B cell (primary cell): ENCODE measurements at regions of chr1 and their contacts with region 1.

Region 1: DNA sequence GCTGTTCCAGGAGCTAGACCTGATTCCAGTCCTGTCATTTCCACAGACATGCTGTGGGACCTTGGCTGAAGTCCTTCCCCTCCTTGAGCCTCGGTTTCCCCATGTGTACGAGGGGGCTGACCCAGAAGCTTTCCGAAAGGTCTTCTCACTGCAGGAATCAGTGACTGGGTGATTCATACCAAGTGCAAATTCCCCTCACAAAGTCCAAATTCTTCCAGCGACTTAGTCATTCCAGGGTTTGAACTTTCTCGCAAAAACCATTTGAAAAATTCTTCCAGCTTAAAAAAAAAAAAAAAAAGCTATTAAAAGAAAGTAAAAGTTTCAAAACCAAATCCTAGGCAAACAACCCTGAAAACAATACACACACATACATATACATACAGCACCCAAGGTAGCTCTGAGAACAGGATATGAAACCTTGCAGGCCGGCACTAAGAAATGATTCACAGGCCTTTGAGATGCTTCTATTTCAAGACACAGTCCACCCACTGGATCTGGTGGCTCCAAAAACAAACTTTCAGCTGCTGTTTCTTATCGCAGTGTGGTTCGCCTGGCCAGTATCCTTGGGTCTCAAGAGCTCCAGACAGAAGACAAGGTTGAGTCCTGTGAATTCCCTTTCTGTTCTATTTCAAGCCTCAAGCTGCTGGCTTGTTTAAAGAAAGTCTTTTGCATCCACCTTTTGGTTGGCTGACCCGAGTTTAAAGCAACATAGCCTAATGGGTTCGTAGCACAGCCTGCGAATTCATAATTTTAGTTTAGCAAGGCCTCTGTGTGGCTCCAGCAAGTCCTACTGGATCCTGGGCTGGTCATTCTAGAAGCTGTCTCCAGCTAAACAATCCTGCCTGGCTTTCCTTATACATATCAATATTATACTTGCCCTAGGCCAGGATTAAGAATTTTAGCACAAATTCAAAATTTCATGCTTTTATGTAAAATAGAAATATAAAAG is 18.0 kb upstream of the ID3 start:
- DNase-seq: peak; percentile 80
- ATAC-seq: peak; percentile 85
- H3K4me3 ChIP-seq: peak overlapping the region in 4 of 5 experiments; percentile 13 to 53 (median 20)
- H3K4me3 Mint-ChIP-seq: peak overlapping the region; percentile 83
- H3K27ac ChIP-seq: peak overlapping the region; percentile 75 to 83
- H3K27ac Mint-ChIP-seq: peak overlapping the region; percentile 98
- H3K4me1 ChIP-seq: peaks cover 78 to 85% of the 10 kb centered on the region in 2 donors
- H3K4me1 Mint-ChIP-seq: peaks cover 85% of the 10 kb centered on the region
- H3K27me3 ChIP-seq: no peaks in the 10 kb centered on the region
- H3K27me3 Mint-ChIP-seq: no peaks in the 10 kb centered on the region
- CTCF ChIP-seq: no peak

Region 2: GRCh38 chr1:23613191-23614031 is 36.1 kb after region 1 on chr1:
- CTCF ChIA-PET with region 1: interaction called, 14 read pairs
- POLR2A ChIA-PET with region 1: interaction called, 34 read pairs
- intact Hi-C with region 1: loop called (anchors 1 kb)
- DNase-seq: peak; percentile 62
- ATAC-seq: peak; percentile 52
- H3K4me3 ChIP-seq: no peak overlapping the region
- H3K4me3 Mint-ChIP-seq: peak overlapping the region; percentile 75
- H3K27ac ChIP-seq: peak overlapping the region; percentile 76 to 88
- H3K27ac Mint-ChIP-seq: peak overlapping the region; percentile 86
- H3K4me1 ChIP-seq: peaks cover 62 to 76% of the 10 kb centered on the region in 2 donors
- H3K4me1 Mint-ChIP-seq: peaks cover 79% of the 10 kb centered on the region
- H3K27me3 ChIP-seq: no peaks in the 10 kb centered on the region
- H3K27me3 Mint-ChIP-seq: no peaks in the 10 kb centered on the region
- CTCF ChIP-seq: no peak

Region 3: GRCh38 chr1:23619299-23620188 is 42.2 kb after region 1 on chr1:
- CTCF ChIA-PET with region 1: interaction called, 17 read pairs
- POLR2A ChIA-PET with region 1: interaction called, 34 read pairs
- intact Hi-C with region 1: no loop called
- DNase-seq: peak; percentile 89
- ATAC-seq: peak; percentile 88
- H3K4me3 ChIP-seq: peak overlapping the region in 4 of 5 experiments; percentile 29 to 59 (median 50)
- H3K4me3 Mint-ChIP-seq: peak overlapping the region; percentile 82
- H3K27ac ChIP-seq: peak overlapping the region; percentile 93 to 94
- H3K27ac Mint-ChIP-seq: peak overlapping the region; percentile 98
- H3K4me1 ChIP-seq: peaks cover 77 to 93% of the 10 kb centered on the region in 2 donors
- H3K4me1 Mint-ChIP-seq: peaks cover 87% of the 10 kb centered on the region
- H3K27me3 ChIP-seq: no peaks in the 10 kb centered on the region
- H3K27me3 Mint-ChIP-seq: no peaks in the 10 kb centered on the region
- CTCF ChIP-seq: no peak

Region 4: GRCh38 chr1:23627069-23627735 is 49.9 kb after region 1 on chr1:
- CTCF ChIA-PET with region 1: interaction called, 1,420 read pairs
- POLR2A ChIA-PET with region 1: interaction called, 34 read pairs
- intact Hi-C with region 1: no loop called
- DNase-seq: peak; percentile 72
- ATAC-seq: peak; percentile 38
- H3K4me3 ChIP-seq: peak overlapping the region in 4 of 5 experiments; percentile 15 to 46 (median 25)
- H3K4me3 Mint-ChIP-seq: peak overlapping the region; percentile 76
- H3K27ac ChIP-seq: peak overlapping the region; percentile 62 to 65
- H3K27ac Mint-ChIP-seq: peak overlapping the region; percentile 90
- H3K4me1 ChIP-seq: peaks cover 73 to 88% of the 10 kb centered on the region in 2 donors
- H3K4me1 Mint-ChIP-seq: peaks cover 73% of the 10 kb centered on the region
- H3K27me3 ChIP-seq: no peaks in the 10 kb centered on the region
- H3K27me3 Mint-ChIP-seq: no peaks in the 10 kb centered on the region
- CTCF ChIP-seq: no peak